ENCODE measurements at regions of chr14 and their contacts with region 1.

Region 1: GRCh38 chr14:98138666-98139065 is 1133.3 kb downstream of the BCL11B start:
- DNase-seq: peak; percentile 48 to 88 (median 64)
- ATAC-seq: peak; percentile 47
- H3K4me3 ChIP-seq: peak overlapping the region; percentile 41
- H3K4me3 Mint-ChIP-seq: peak overlapping the region; percentile 80
- H3K27ac ChIP-seq: peak overlapping the region; percentile 56 to 71
- H3K27ac Mint-ChIP-seq: peak overlapping the region; percentile 92
- H3K4me1 ChIP-seq: peaks cover 65% of the 10 kb centered on the region
- H3K4me1 Mint-ChIP-seq: peaks cover 99% of the 10 kb centered on the region
- H3K27me3 ChIP-seq: no peaks in the 10 kb centered on the region
- H3K27me3 Mint-ChIP-seq: no peaks in the 10 kb centered on the region
- CTCF ChIP-seq: peak; percentile 94

Region 2: GRCh38 chr14:98018628-98019027 is 120.0 kb before region 1 on chr14:
- CTCF ChIA-PET with region 1: interaction called, 4 read pairs
- POLR2A ChIA-PET with region 1: interaction called, 11 read pairs
- intact Hi-C with region 1: no loop called
- DNase-seq: peak in 11 of 14 experiments; percentile 17 to 71 (median 37)
- ATAC-seq: peak; percentile 91
- H3K4me3 ChIP-seq: no peak overlapping the region
- H3K4me3 Mint-ChIP-seq: peak overlapping the region; percentile 32
- H3K27ac ChIP-seq: no peak overlapping the region
- H3K27ac Mint-ChIP-seq: peak overlapping the region; percentile 42
- H3K4me1 ChIP-seq: peaks cover 53% of the 10 kb centered on the region
- H3K4me1 Mint-ChIP-seq: peaks cover 75% of the 10 kb centered on the region
- H3K27me3 ChIP-seq: no peaks in the 10 kb centered on the region
- H3K27me3 Mint-ChIP-seq: no peaks in the 10 kb centered on the region
- CTCF ChIP-seq: no peak

Region 3: DNA sequence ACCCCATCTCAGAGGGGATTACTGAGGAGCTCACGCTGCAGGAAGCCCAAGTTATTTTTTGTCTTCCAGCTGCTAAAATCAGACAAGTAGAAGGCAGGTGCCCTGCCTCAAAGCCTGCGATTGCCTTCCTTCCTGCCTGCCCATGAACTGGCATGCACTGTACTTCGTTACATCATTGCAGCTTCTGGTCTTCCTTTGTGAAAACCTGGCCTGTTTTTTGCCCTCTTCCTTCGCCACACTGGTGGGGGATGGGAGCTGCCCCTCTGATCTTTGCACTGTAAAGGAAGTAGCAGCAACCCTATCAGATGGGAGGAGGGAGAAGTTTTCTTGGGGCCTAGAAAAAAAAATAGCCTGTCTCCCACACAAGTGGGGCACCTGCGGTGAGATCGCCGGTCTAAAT is 34.6 kb after region 1 on chr14:
- CTCF ChIA-PET with region 1: interaction called, 4 read pairs
- POLR2A ChIA-PET with region 1: interaction called, 183 read pairs
- intact Hi-C with region 1: loop called (anchors 2 to 5 kb)
- DNase-seq: peak; percentile 34 to 94 (median 74)
- ATAC-seq: peak; percentile 70
- H3K4me3 ChIP-seq: peak overlapping the region; percentile 33
- H3K4me3 Mint-ChIP-seq: peak overlapping the region; percentile 83
- H3K27ac ChIP-seq: peak overlapping the region; percentile 78 to 80
- H3K27ac Mint-ChIP-seq: peak overlapping the region; percentile 93
- H3K4me1 ChIP-seq: peaks cover 92% of the 10 kb centered on the region
- H3K4me1 Mint-ChIP-seq: peaks cover 100% of the 10 kb centered on the region
- H3K27me3 ChIP-seq: no peaks in the 10 kb centered on the region
- H3K27me3 Mint-ChIP-seq: no peaks in the 10 kb centered on the region
- CTCF ChIP-seq: no peak

Region 4: GRCh38 chr14:98227000-98227726 is 88.5 kb after region 1 on chr14:
- CTCF ChIA-PET with region 1: interaction called, 3 read pairs
- POLR2A ChIA-PET with region 1: interaction called, 23 read pairs
- intact Hi-C with region 1: loop called (anchors 2 to 5 kb)
- DNase-seq: peak in 5 of 14 experiments; percentile 13 to 56 (median 48)
- ATAC-seq: no peak
- H3K4me3 ChIP-seq: no peak overlapping the region
- H3K4me3 Mint-ChIP-seq: peak overlapping the region; percentile 61
- H3K27ac ChIP-seq: peak overlapping the region; percentile 65
- H3K27ac Mint-ChIP-seq: peak overlapping the region; percentile 96
- H3K4me1 ChIP-seq: peaks cover 84% of the 10 kb centered on the region
- H3K4me1 Mint-ChIP-seq: peaks cover 94% of the 10 kb centered on the region
- H3K27me3 ChIP-seq: no peaks in the 10 kb centered on the region
- H3K27me3 Mint-ChIP-seq: no peaks in the 10 kb centered on the region
- CTCF ChIP-seq: no peak

Region 5: GRCh38 chr14:99177886-99178835 is 1039.5 kb after region 1 on chr14:
- CTCF ChIA-PET with region 1: no interaction called
- POLR2A ChIA-PET with region 1: interaction called, 5 read pairs
- intact Hi-C with region 1: loop called in 1 of 2 experiments (anchors 5 kb)
- DNase-seq: peak in 2 of 14 experiments; percentile 0 to 9
- ATAC-seq: no peak
- H3K4me3 ChIP-seq: no peak overlapping the region
- H3K4me3 Mint-ChIP-seq: peak overlapping the region; percentile 39
- H3K27ac ChIP-seq: peak overlapping the region; percentile 37 to 80
- H3K27ac Mint-ChIP-seq: peak overlapping the region; percentile 95
- H3K4me1 ChIP-seq: peaks cover 56% of the 10 kb centered on the region
- H3K4me1 Mint-ChIP-seq: peaks cover 75% of the 10 kb centered on the region
- H3K27me3 ChIP-seq: no peaks in the 10 kb centered on the region
- H3K27me3 Mint-ChIP-seq: no peaks in the 10 kb centered on the region
- CTCF ChIP-seq: no peak

Measured in CD4-positive, alpha-beta T cell (primary cell).